ENCODE measurements at regions of chr19 and their contacts with region 1.

Region 1: GRCh38 chr19:38229585-38230073 is 5.6 kb upstream of the DPF1 start:
- DNase-seq: peak; percentile 67 to 86 (median 81)
- ATAC-seq: peak; percentile 81 to 84
- H3K4me3 ChIP-seq: peak overlapping the region; percentile 27
- H3K27ac ChIP-seq: no peak overlapping the region
- H3K4me1 ChIP-seq: no peaks in the 10 kb centered on the region
- H3K27me3 ChIP-seq: no peaks in the 10 kb centered on the region

Region 2: DNA sequence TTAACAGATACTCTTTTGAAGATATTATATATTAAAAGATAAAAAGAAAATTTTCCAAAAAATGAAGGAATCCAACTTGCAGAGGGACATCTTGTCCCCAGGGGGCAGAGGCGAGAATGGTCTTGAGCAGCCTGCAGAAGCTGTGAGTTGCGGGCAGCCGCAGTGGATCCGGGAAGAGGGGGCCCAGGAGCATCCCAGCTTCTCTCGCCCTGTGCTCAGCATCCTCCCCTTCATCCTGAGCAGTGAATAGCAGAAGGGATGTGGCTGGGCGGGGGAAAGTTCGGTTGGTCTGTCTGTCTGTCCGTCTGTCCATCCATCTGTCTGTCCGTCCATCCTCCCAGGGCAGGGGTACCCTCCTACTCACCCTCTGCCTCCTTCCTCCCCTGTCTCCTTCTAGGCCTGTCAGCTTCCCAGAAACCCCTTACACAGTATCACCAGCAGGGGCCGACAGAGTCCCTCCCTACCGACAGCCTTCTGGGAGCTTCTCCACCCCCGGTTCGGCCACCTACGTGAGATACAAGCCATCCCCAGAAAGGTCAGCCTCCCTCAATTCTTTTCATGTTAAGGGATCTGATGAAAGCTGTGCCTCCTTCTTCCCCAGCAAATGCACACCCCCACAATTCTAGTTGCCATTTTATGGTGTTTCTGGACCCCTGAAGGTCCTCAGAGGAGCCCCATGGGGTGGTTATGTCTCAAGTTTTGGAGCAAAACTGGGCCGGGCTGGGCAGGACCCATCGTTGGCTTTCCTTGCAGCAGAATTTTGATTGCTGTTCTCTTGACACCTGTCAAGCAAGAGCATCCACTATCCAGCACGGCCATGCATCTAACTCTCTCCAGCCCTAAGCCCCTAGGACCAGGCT is 87.2 kb before region 1 on chr19:
- intact Hi-C with region 1: loop called in 3 of 4 experiments (anchors 10 kb)
- DNase-seq: peak; percentile 57 to 83 (median 78)
- ATAC-seq: peak; percentile 58 to 75
- H3K4me3 ChIP-seq: no peak overlapping the region
- H3K27ac ChIP-seq: no peak overlapping the region
- H3K4me1 ChIP-seq: no peaks in the 10 kb centered on the region
- H3K27me3 ChIP-seq: no peaks in the 10 kb centered on the region